Activated T-helper 1 cell treated with anti-CD3 and anti-CD28 coated beads, Interleukin-12 subunit alpha, Interleukin-12 subunit beta, Interleukin-2, Interleukin-4 antibody, amounts not matched to agents 30 ng/mL and 10 ng/mL and 1 ng/mL, durations not matched to agents 14 hours and 24 hours and 36 hours (primary cell): ENCODE measurements at regions of chr1 and their contacts with region 1.

Region 1: GRCh38 chr1:119675349-119676345 is 27.6 kb upstream of the ZNF697 start:
- DNase-seq: peak; percentile 39
- H3K4me3 Mint-ChIP-seq: no peak overlapping the region
- H3K27ac Mint-ChIP-seq: no peak overlapping the region
- H3K4me1 Mint-ChIP-seq: no peaks in the 10 kb centered on the region
- H3K27me3 Mint-ChIP-seq: peaks cover 20% of the 10 kb centered on the region

Region 2: DNA sequence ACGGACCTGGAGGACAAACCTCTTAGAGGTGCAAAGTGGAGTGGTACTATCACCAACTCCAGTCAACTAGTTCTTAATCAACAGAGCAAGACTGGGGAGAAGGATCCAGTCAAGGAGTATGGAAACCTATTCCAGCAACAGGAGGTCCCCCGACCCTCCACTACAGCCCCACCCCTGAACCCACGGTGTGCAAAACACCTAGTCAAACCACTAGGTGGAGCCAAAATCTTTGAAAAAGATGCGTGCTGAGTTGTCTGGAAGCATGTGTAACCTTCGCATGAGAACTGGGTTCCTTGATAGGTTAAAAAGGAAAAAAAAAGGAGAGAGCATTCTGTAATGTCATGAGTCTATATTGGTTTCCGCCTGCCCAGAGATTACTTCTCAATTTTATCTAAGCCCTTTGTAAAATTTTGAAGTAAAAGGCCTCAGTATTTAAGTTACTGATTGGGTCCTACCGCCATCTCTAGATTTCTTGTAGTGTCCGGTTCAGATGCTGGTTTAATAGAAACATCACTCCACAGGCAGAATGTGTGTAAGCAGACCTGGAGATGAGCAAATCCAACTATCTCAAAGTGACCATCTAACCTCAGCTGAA is 389.0 kb before region 1 on chr1:
- intact Hi-C with region 1: loop called (anchors 10 kb)
- DNase-seq: no peak
- H3K4me3 Mint-ChIP-seq: no peak overlapping the region
- H3K27ac Mint-ChIP-seq: no peak overlapping the region
- H3K4me1 Mint-ChIP-seq: no peaks in the 10 kb centered on the region
- H3K27me3 Mint-ChIP-seq: peaks cover 15% of the 10 kb centered on the region

Region 3: GRCh38 chr1:119482531-119483425 is 192.9 kb before region 1 on chr1:
- intact Hi-C with region 1: no loop called
- DNase-seq: no peak
- H3K4me3 Mint-ChIP-seq: no peak overlapping the region
- H3K27ac Mint-ChIP-seq: no peak overlapping the region
- H3K4me1 Mint-ChIP-seq: no peaks in the 10 kb centered on the region
- H3K27me3 Mint-ChIP-seq: peaks cover 7% of the 10 kb centered on the region

Region 4: GRCh38 chr1:119613769-119614720 is 61.6 kb before region 1 on chr1:
- intact Hi-C with region 1: loop called (anchors 1 kb)
- DNase-seq: peak; percentile 52
- H3K4me3 Mint-ChIP-seq: no peak overlapping the region
- H3K27ac Mint-ChIP-seq: no peak overlapping the region
- H3K4me1 Mint-ChIP-seq: no peaks in the 10 kb centered on the region
- H3K27me3 Mint-ChIP-seq: peaks cover 5% of the 10 kb centered on the region

Region 5: GRCh38 chr1:119647734-119648619 is 27.7 kb before region 1 on chr1 and contains the start of gene ZNF697:
- intact Hi-C with region 1: loop called (anchors 1 kb)
- DNase-seq: peak; percentile 28
- H3K4me3 Mint-ChIP-seq: peak within 1 kb of the TSS; percentile 82
- H3K27ac Mint-ChIP-seq: no peak within 1 kb of the TSS
- H3K4me1 Mint-ChIP-seq: peaks cover 23% of the 10 kb centered on the region
- H3K27me3 Mint-ChIP-seq: peaks cover 58% of the 10 kb centered on the region
- total RNA-seq, gene ZNF697: 2.9 and 3.0 TPM in 2 replicates